WTC11 (cell line): ENCODE measurements at regions of chr11 and their contacts with region 1.

Region 1: GRCh38 chr11:64652586-64653387 is 61.8 kb downstream of the SLC22A12 start:
- DNase-seq: peak; percentile 97
- ATAC-seq: peak; percentile 79
- H3K4me3 Mint-ChIP-seq: peak overlapping the region; percentile 20; the same call in 1 of the 2 replicates
- H3K27ac Mint-ChIP-seq: no peak overlapping the region
- H3K4me1 Mint-ChIP-seq: peaks cover 12% of the 10 kb centered on the region
- H3K27me3 Mint-ChIP-seq: peaks cover 14% of the 10 kb centered on the region
- CTCF ChIP-seq: peak; percentile 80

Region 2: DNA sequence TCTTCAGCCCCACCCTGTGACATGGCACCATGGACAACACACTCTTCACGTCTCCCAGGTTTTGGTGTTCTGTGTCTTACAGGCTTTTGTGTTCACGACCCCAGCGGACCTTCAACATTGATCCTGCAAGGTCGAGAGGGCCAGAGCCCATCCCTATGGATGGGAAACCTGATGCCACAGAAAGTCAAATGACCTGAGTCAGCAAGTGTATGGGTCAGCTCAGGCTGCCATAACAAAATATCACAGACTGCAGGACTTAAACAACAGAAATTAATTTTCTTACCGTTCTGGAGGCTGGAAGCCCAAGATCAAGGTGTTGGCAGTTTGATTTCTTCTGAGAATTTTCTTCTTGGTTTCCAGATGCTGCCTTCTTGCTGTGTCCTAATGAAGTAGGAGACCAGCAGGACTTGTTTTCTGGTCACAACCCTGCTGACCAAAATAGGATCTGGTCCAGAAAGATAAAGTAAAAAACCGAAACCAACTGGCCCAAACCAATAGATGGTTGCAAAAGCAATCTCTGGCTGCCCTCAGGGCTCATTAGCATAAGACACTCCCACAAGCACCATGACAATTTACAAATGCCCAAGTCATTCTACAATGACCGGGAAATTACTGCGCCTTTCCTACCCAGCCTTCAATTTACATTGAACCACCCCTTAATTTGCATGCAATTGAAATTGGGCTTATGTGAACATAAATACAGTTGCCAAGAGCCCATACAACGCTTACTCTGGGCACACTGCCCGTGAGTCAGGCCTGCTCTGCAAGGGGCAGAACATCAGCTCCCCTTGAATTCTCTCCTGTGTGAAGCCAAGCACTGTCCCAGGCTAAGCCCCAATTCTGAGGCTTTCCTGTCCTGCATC is 180.0 kb before region 1 on chr11:
- CTCF ChIA-PET with region 1: interaction called, 11 read pairs
- POLR2A ChIA-PET with region 1: no interaction called
- DNase-seq: no peak
- ATAC-seq: no peak
- H3K4me3 Mint-ChIP-seq: no peak overlapping the region
- H3K27ac Mint-ChIP-seq: no peak overlapping the region
- H3K4me1 Mint-ChIP-seq: peaks cover 13% of the 10 kb centered on the region
- H3K27me3 Mint-ChIP-seq: peaks cover 37% of the 10 kb centered on the region
- CTCF ChIP-seq: no peak

Region 3: GRCh38 chr11:64566042-64566914 is 86.5 kb before region 1 on chr11:
- CTCF ChIA-PET with region 1: interaction called, 97 read pairs
- POLR2A ChIA-PET with region 1: no interaction called
- DNase-seq: peak; percentile 59
- ATAC-seq: peak; percentile 45
- H3K4me3 Mint-ChIP-seq: peak overlapping the region; percentile 64
- H3K27ac Mint-ChIP-seq: peak overlapping the region; percentile 99
- H3K4me1 Mint-ChIP-seq: peaks cover 28% of the 10 kb centered on the region
- H3K27me3 Mint-ChIP-seq: no peaks in the 10 kb centered on the region
- CTCF ChIP-seq: no peak

Region 4: GRCh38 chr11:64608046-64608445 is 44.7 kb before region 1 on chr11:
- CTCF ChIA-PET with region 1: interaction called, 11 read pairs
- POLR2A ChIA-PET with region 1: no interaction called
- DNase-seq: no peak
- ATAC-seq: peak; percentile 38
- H3K4me3 Mint-ChIP-seq: no peak overlapping the region
- H3K27ac Mint-ChIP-seq: no peak overlapping the region
- H3K4me1 Mint-ChIP-seq: peaks cover 7% of the 10 kb centered on the region; the same call in 1 of the 2 replicates
- H3K27me3 Mint-ChIP-seq: no peaks in the 10 kb centered on the region; the same call in none of the 2 replicates
- CTCF ChIP-seq: no peak

Region 5: DNA sequence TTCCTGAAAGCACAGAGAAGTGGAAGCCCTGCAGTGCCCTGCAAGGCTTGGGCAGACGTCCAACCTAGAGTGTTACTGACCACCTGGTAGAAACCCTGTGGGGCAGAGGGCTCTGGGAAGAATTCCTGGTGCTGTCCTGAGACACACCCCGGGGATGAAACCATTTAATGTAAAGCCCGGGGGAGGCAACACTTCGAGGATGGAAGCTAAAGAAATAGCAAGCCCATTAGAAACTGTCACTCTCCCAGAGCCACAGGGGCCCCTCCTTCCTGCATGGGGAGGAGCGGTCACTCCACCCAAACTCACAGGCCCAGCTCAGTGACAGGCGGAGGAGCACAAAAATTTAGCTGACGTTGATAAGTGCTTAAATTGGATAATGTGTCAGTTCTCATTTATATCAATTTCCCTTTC is 12.6 kb after region 1 on chr11:
- CTCF ChIA-PET with region 1: interaction called, 27 read pairs
- POLR2A ChIA-PET with region 1: no interaction called
- DNase-seq: no peak
- ATAC-seq: no peak
- H3K4me3 Mint-ChIP-seq: no peak overlapping the region
- H3K27ac Mint-ChIP-seq: no peak overlapping the region
- H3K4me1 Mint-ChIP-seq: peaks cover 4% of the 10 kb centered on the region
- H3K27me3 Mint-ChIP-seq: peaks cover 6% of the 10 kb centered on the region
- CTCF ChIP-seq: no peak

Region 6: DNA sequence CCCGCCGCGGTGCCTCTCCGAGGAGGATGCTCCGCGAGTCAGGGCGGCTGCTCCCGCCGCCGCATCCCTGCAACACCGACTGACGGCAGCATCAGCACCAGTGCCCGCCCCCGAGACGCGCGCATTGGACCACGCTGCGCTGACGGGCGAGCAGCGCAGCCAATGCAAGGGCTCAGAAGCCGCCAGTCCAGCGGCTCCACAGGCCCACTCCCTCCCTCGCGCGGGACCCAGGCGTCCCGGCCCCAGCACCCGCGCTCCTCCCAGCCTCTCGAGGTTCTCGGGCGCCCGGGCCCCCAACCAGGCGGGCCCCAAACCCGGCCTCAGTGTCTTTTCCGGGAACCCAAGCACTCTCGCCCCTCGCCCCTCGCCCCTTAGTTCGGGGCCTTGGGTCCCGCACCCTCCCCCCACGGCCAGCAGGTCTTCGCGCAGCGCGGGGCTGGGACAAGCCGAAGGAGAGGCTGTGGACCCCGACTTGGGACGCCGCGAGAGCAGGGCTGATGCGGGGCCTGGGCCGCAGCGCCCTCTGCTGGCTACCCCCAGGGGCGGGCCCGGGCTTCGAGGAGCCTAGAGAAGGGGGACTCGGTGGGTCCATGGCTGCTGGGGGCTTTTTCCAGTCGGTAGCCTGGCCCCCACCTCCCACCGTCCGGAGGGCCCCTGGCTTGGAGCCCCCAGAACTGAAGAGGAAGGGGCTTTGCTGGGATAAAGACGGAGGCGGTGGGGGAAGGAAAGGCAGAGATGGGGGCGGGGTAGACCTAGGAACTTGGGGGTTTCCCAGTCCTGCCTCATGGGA is 70.5 kb after region 1 on chr11 and contains the start of gene NRXN2:
- CTCF ChIA-PET with region 1: interaction called, 11 read pairs
- POLR2A ChIA-PET with region 1: no interaction called
- DNase-seq: peak; percentile 87
- ATAC-seq: peak; percentile 88
- H3K4me3 Mint-ChIP-seq: peak within 1 kb of the TSS; percentile 50
- H3K27ac Mint-ChIP-seq: no peak within 1 kb of the TSS
- H3K4me1 Mint-ChIP-seq: peaks cover 44% of the 10 kb centered on the region
- H3K27me3 Mint-ChIP-seq: peaks cover 47% of the 10 kb centered on the region
- CTCF ChIP-seq: peak; percentile 93
- total RNA-seq, gene NRXN2: 8.0 to 10.4 TPM (median 8.6 TPM) in 3 replicates